ENCODE measurements at regions of chr12 and their contacts with region 1.

Region 1: GRCh38 chr12:4866299-4866698 is 43.4 kb upstream of the KCNA1 start:
- DNase-seq: no peak
- CTCF ChIP-seq: no peak

Region 2: GRCh38 chr12:5003020-5003666 is 136.8 kb after region 1 on chr12:
- CTCF ChIA-PET with region 1: interaction called, 198 read pairs
- POLR2A ChIA-PET with region 1: no interaction called
- DNase-seq: peak; percentile 71
- CTCF ChIP-seq: peak; percentile 99

Region 3: GRCh38 chr12:5171701-5172100 is 305.4 kb after region 1 on chr12:
- CTCF ChIA-PET with region 1: no interaction called
- POLR2A ChIA-PET with region 1: no interaction called
- DNase-seq: no peak
- CTCF ChIP-seq: peak; percentile 31

Measured in GM10248 (cell line).